Activated B cell treated with CpG ODN at 0.5 μM for 24 hours (primary cell): ENCODE measurements at regions of chr2 and their contacts with region 1.

Region 1: DNA sequence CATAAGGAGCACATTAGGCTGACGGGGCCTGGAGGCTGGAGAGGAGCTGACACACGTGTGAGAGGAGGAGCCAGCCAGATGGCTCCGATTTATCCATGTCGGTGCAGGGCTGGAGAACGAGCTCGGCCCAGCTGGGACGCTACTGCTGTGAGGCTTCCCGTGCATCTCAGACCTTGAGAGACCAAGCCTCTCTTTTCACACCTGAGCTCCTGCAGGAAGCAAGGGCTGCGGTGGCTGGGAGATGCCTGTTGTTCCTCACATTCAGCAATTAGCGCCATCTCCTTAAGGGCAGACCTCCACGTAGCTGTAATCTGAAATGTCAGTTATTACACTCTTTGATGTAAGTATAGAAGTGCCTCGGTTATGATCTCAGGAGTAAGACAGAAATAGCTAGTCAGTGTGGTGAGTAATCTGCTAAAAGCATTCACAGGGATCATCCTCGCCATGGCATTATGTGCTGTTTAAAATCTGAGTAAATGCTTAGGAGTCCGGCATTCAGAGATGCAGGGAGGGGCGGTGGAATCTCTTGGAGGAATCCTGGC is 107.9 kb downstream of the PRKCE start:
- DNase-seq: no peak
- ATAC-seq: no peak
- H3K4me3 Mint-ChIP-seq: no peak overlapping the region
- H3K27ac Mint-ChIP-seq: no peak overlapping the region
- H3K4me1 Mint-ChIP-seq: peaks cover 45% of the 10 kb centered on the region
- H3K27me3 Mint-ChIP-seq: no peaks in the 10 kb centered on the region
- CTCF ChIP-seq: no peak

Region 2: GRCh38 chr2:45680351-45680967 is 78.9 kb before region 1 on chr2:
- CTCF ChIA-PET with region 1: no interaction called
- POLR2A ChIA-PET with region 1: interaction called, 17 read pairs
- intact Hi-C with region 1: no loop called
- DNase-seq: no peak
- ATAC-seq: no peak
- H3K4me3 Mint-ChIP-seq: no peak overlapping the region
- H3K27ac Mint-ChIP-seq: no peak overlapping the region
- H3K4me1 Mint-ChIP-seq: peaks cover 52% of the 10 kb centered on the region
- H3K27me3 Mint-ChIP-seq: no peaks in the 10 kb centered on the region
- CTCF ChIP-seq: no peak

Region 3: DNA sequence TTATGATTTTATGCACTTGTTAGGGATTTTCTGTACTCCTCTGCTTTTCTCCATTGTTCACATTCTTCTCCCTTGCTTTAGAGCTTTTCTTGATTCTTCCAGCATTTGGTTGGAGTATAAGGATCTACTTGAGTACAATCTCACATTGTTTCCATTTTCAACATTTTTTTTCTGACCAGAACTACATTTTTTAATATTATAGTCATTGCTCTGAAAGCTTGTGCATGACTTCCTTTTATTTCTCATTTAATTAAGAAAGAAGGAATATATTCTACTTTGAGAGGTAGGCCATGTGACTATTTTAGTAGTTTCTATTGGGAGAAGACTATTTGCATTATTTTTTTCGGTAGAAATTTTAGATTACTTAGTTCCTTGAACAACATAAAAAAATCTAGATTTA is 920.4 kb after region 1 on chr2:
- CTCF ChIA-PET with region 1: no interaction called
- POLR2A ChIA-PET with region 1: interaction called, 11 read pairs
- intact Hi-C with region 1: no loop called
- DNase-seq: no peak
- ATAC-seq: no peak
- H3K4me3 Mint-ChIP-seq: no peak overlapping the region
- H3K27ac Mint-ChIP-seq: no peak overlapping the region
- H3K4me1 Mint-ChIP-seq: peaks cover 48% of the 10 kb centered on the region
- H3K27me3 Mint-ChIP-seq: peaks cover 5% of the 10 kb centered on the region
- CTCF ChIP-seq: no peak